ENCODE measurements at regions of chr16 and their contacts with region 1.

Region 1: GRCh38 chr16:4882633-4883285 is 35.5 kb downstream of the UBN1 start:
- DNase-seq: peak; percentile 94
- ATAC-seq: peak; percentile 88
- H3K4me3 ChIP-seq: no peak overlapping the region
- H3K27ac ChIP-seq: peak overlapping the region; percentile 53
- H3K4me1 ChIP-seq: peaks cover 34% of the 10 kb centered on the region
- H3K27me3 ChIP-seq: no peaks in the 10 kb centered on the region
- CTCF ChIP-seq: no peak

Region 2: GRCh38 chr16:4866586-4866985 is 16.2 kb before region 1 on chr16:
- CTCF ChIA-PET with region 1: interaction called, 3 read pairs
- POLR2A ChIA-PET with region 1: no interaction called
- intact Hi-C with region 1: loop called (anchors 2 kb)
- DNase-seq: no peak
- ATAC-seq: no peak
- H3K4me3 ChIP-seq: no peak overlapping the region
- H3K27ac ChIP-seq: no peak overlapping the region
- H3K4me1 ChIP-seq: peaks cover 14% of the 10 kb centered on the region
- H3K27me3 ChIP-seq: no peaks in the 10 kb centered on the region
- CTCF ChIP-seq: no peak

Region 3: DNA sequence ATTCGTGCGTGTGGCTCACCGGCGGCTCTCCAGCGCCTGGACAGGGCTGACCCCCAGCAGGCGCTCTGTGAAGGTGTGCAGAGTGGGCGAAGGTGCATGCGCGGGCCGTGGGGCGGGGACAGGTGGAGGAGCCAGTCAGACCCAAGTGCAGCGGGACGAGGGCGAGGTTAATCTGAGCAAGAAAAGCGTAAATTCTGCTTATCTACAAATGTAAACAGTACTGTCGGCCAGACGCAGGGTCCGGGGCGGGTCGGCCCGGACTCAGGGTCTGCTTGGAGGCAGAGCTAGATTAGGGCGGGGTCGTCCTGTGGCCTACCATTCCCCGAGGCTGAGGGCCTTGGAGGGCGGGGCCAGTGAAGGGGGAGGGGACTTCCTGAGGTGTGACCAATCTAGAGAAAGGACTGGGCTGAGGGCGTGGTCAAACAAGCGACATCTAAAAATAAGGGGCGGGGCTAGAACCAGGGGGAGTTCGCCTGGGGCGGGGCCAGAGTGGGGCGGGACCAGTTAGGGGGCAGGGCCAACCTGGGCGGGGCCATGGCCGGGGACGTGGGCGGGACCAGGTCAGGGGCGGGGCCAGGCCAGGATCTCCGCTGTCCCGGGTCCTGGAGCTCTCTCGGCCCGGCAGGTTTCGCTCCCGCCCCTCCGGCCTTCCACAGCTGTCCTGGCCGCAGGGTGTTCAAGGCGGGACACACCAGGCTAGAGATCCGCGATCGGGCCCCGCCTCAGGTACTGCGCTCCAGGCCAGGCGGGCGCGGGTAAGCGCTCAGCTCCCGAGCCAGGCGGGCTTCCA is 75.2 kb after region 1 on chr16 and contains the start of gene SEC14L5:
- CTCF ChIA-PET with region 1: no interaction called
- POLR2A ChIA-PET with region 1: no interaction called
- intact Hi-C with region 1: loop called (anchors 2 kb)
- DNase-seq: peak; percentile 95
- ATAC-seq: peak; percentile 79
- H3K4me3 ChIP-seq: peak within 1 kb of the TSS; percentile 68
- H3K27ac ChIP-seq: peak within 1 kb of the TSS; percentile 2; the same call in 1 of the 2 replicates
- H3K4me1 ChIP-seq: 0 out of 2 replicates have a peak, but pooled peaks cover 8% of the 10 kb centered on the region
- H3K27me3 ChIP-seq: no peaks in the 10 kb centered on the region
- CTCF ChIP-seq: no peak; the same call in 1 of the 2 replicates
- total RNA-seq, gene SEC14L5: not detected in 2 replicates

Region 4: DNA sequence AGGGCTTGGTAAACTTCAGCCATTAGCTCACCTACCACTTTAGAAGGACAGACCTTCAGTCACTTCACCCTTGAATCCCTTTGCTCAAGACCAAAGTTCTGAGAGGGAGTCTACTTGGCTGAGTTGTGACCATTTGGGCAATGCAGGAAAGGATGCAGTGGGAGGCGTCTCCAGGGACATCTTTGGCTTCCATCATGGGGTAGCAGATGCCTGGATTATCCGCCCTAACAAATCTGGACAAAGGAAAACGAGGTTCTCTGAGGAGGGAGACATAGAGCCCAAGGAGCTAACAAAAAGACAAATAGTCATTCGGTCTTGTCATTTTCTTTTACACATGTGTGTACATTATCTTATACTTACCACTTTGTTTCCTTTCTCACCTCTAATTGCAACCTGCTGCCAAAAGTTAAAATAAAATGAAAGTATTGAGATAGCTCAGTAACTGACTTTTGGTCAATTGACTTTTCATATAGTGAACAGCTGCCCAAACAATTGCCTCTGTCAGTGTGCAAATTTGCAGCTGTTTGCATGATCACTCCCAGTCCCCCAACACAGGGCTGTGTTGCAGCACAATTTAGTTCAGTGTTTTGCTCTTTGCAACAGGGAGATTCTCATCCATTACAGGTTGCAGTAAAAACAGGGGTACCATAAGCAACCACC is 323.7 kb after region 1 on chr16:
- CTCF ChIA-PET with region 1: no interaction called
- POLR2A ChIA-PET with region 1: no interaction called
- intact Hi-C with region 1: no loop called
- DNase-seq: no peak
- ATAC-seq: no peak
- H3K4me3 ChIP-seq: no peak overlapping the region
- H3K27ac ChIP-seq: no peak overlapping the region
- H3K4me1 ChIP-seq: no peaks in the 10 kb centered on the region
- H3K27me3 ChIP-seq: no peaks in the 10 kb centered on the region
- CTCF ChIP-seq: no peak